Gastrocnemius medialis (tissue), 4 donors: ENCODE measurements at regions of chr17 and their contacts with region 1.

Region 1: DNA sequence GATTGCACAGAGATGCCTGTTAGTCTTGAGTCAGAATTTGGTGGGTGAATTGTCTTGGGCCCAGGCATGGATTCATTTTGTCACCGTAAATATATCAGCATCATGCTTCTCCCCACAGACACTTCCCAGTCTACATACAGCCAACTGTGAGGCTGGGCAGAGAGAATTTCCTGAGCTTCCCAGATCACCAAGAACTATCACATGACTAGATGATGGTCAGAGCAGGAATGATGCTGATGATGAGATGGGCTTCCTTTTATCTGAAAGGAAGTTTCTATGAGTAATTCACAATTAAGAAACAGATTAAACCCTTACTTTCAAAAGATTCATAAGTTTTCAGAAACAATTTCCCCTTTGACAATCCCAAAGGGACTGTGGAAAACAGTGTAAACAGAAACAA is 323 bp upstream of the KRTAP9-9 start:
- DNase-seq: no peak
- ATAC-seq: no peak
- H3K4me3 ChIP-seq: no peak overlapping the region
- H3K27ac ChIP-seq: no peak overlapping the region
- H3K4me1 ChIP-seq: no peaks in the 10 kb centered on the region
- H3K27me3 ChIP-seq: peaks cover 0 to 31% (median 5%) of the 10 kb centered on the region in 3 donors
- CTCF ChIP-seq: no peak
- POLR2A ChIP-seq: no peak

Region 2: GRCh38 chr17:40862985-40863733 is 391.7 kb before region 1 on chr17:
- in situ Hi-C with region 1: no loop called
- intact Hi-C with region 1: no loop called
- DNase-seq: no peak
- ATAC-seq: no peak
- H3K4me3 ChIP-seq: no peak overlapping the region
- H3K27ac ChIP-seq: no peak overlapping the region
- H3K4me1 ChIP-seq: no peaks in the 10 kb centered on the region
- H3K27me3 ChIP-seq: peaks cover 0 to 3% (median 0%) of the 10 kb centered on the region in 3 donors
- CTCF ChIP-seq: no peak
- POLR2A ChIP-seq: no peak

Region 3: GRCh38 chr17:41153856-41154255 is 101.0 kb before region 1 on chr17:
- in situ Hi-C with region 1: loop called in 1 of 4 experiments (anchors 25 kb)
- intact Hi-C with region 1: no loop called
- DNase-seq: no peak
- ATAC-seq: no peak
- H3K4me3 ChIP-seq: no peak overlapping the region
- H3K27ac ChIP-seq: no peak overlapping the region
- H3K4me1 ChIP-seq: no peaks in the 10 kb centered on the region
- H3K27me3 ChIP-seq: peaks cover 6 to 8% (median 8%) of the 10 kb centered on the region in 3 donors
- CTCF ChIP-seq: no peak
- POLR2A ChIP-seq: no peak